ENCODE measurements at regions of chr4 and their contacts with region 1.

Region 1: DNA sequence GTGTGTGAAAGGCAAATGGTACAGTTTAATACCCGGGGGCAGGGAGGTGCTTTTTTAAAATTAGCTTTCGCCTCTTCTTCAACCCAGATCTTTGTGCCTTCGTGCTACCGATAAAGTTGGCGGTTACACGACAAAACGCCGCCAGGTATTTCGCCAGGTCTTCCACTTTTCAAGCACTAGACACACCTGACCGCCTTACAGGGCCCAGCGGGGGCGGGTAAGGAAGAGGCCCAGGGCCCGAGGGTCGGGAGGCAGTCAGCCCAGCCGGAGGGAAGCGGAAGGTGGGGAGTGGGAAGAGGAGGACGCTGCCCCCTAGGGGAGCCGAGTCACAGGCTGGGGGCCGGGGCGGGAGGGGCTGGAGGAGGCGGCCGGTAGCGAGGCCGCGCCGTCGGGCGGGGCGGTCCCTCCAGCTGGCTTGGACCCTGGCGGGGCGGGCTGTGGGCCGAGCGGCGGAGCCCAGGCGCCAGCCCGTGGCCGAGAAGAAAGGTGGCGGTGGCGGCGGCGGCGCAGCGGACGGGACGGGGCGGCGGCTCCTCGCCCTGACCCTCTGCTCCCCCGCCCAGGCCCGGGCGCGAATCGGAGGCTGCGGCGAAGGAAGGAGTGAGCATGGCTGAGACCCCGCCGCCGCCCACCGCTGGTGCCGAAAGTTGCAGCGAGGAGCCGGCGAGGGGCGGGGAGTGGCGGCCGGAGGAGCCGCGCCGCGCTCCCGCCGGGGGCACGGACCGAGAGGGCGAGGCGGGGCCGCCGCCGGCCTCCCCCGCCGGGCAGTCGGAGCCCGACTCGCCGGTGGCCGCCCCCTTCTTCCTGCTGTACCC is 16.2 kb downstream of the UTP3 start:
- DNase-seq: peak; percentile 40
- H3K4me3 Mint-ChIP-seq: peak overlapping the region; percentile 84
- H3K27ac Mint-ChIP-seq: peak overlapping the region; percentile 81
- H3K4me1 Mint-ChIP-seq: peaks cover 27% of the 10 kb centered on the region
- H3K27me3 Mint-ChIP-seq: no peaks in the 10 kb centered on the region

Region 2: DNA sequence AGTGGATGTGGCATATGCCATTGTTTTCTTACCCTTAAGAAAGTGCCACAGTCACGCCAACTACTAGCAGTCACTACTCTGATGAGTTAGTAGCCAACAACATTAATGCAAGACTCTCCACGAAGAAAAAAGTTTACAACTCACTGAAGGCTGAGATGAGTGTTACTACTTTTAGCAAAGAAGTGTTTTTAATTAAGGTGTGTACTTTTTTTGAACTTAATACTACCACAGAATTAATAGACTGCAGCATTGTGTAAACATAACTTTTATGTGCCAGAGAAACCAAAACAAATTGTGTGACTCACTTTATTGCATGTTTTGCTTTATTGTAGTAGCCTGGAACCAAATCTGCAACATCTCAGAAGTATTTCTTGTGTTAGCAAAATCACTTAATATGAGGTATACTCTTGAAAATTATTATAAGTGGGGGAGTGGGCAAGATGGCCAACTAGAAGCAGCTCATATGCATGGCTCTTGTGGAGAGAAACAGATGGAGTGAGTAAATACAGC is 1206.6 kb before region 1 on chr4:
- intact Hi-C with region 1: no loop called
- DNase-seq: no peak
- H3K4me3 Mint-ChIP-seq: no peak overlapping the region
- H3K27ac Mint-ChIP-seq: no peak overlapping the region
- H3K4me1 Mint-ChIP-seq: no peaks in the 10 kb centered on the region
- H3K27me3 Mint-ChIP-seq: no peaks in the 10 kb centered on the region

Region 3: DNA sequence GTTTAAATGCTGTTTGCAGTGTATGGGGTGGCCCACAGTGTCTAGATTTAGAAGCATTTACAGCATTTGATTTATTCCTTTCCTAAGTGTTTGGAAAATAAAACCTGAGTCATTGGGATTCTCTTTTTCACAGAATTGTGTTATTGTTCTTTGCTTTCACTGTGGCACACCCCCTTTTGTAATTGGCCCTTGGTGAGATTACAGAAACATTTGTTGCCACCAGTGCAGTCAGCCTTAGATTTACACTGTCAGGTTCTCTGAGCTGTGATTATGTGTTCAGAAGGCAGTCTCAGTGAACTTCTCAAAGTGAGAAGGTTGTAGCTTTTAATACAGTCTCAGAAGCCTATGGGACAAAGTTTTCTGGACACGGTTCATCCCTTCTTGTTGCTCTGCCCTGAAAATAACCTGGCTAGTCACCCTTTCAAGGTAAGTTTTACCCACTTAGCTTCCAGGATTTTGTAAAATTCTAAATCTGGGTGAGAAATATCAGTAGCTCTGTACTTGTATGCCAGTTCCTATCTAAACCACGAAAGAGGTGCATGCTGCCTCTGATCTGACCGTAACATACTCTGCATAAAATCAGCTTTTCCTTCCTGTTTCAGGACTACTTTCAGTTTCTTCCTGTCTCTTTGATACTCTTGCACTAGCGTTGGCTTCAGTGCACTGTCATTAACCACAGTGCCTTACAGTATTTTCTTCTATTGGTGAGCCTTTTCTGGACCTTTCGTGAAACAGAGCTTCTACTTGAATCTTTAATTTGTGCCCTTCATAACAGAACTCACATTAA is 29.8 kb after region 1 on chr4:
- intact Hi-C with region 1: loop called (anchors 1 kb)
- DNase-seq: peak; percentile 41
- H3K4me3 Mint-ChIP-seq: peak overlapping the region; percentile 74
- H3K27ac Mint-ChIP-seq: peak overlapping the region; percentile 79
- H3K4me1 Mint-ChIP-seq: peaks cover 40% of the 10 kb centered on the region
- H3K27me3 Mint-ChIP-seq: no peaks in the 10 kb centered on the region

Region 4: GRCh38 chr4:70801265-70801809 is 96.8 kb after region 1 on chr4:
- intact Hi-C with region 1: loop called (anchors 1 kb)
- DNase-seq: no peak
- H3K4me3 Mint-ChIP-seq: no peak overlapping the region
- H3K27ac Mint-ChIP-seq: peak overlapping the region; percentile 59
- H3K4me1 Mint-ChIP-seq: peaks cover 20% of the 10 kb centered on the region
- H3K27me3 Mint-ChIP-seq: no peaks in the 10 kb centered on the region

Region 5: GRCh38 chr4:70993181-70994068 is 288.9 kb after region 1 on chr4 and contains the start of gene DCK:
- intact Hi-C with region 1: loop called (anchors 5 kb)
- DNase-seq: peak; percentile 83
- H3K4me3 Mint-ChIP-seq: peak within 1 kb of the TSS; percentile 99
- H3K27ac Mint-ChIP-seq: peak within 1 kb of the TSS; percentile 93
- H3K4me1 Mint-ChIP-seq: peaks cover 39% of the 10 kb centered on the region
- H3K27me3 Mint-ChIP-seq: no peaks in the 10 kb centered on the region
- total RNA-seq, gene DCK: 35.1 and 35.3 TPM in 2 replicates

Measured in activated T-helper 2 cell treated with anti-CD3 and anti-CD28 coated beads, Interferon-gamma antibody, Interleukin-2, Interleukin-4, amounts not matched to agents 10 μg/mL and 5 μg/mL and 100 μg/mL, durations not matched to agents 14 hours and 24 hours and 36 hours (primary cell).